Naive thymus-derived CD4-positive, alpha-beta T cell (primary cell): ENCODE measurements at regions of chr7 and their contacts with region 1.

Region 1: GRCh38 chr7:1919539-1920265 is 249.6 kb downstream of the ELFN1 start:
- DNase-seq: peak in 1 of 9 donors; percentile 46
- ATAC-seq: peak; percentile 21
- H3K4me3 ChIP-seq: peak overlapping the region; percentile 47
- H3K4me3 Mint-ChIP-seq: peak overlapping the region; percentile 79 to 97 (median 87)
- H3K27ac ChIP-seq: peak overlapping the region; percentile 47
- H3K27ac Mint-ChIP-seq: peak overlapping the region; percentile 51 to 97 (median 84)
- H3K4me1 ChIP-seq: peaks cover 21 to 69% of the 10 kb centered on the region in 2 donors
- H3K4me1 Mint-ChIP-seq: peaks cover 48 to 83% (median 59%) of the 10 kb centered on the region in 7 donors
- H3K27me3 ChIP-seq: no peaks in the 10 kb centered on the region
- H3K27me3 Mint-ChIP-seq: peaks cover 0 to 15% (median 0%) of the 10 kb centered on the region in 5 donors

Region 2: GRCh38 chr7:1569833-1570633 is 349.7 kb before region 1 on chr7 and contains the start of gene PSMG3:
- CTCF ChIA-PET with region 1: no interaction called
- POLR2A ChIA-PET with region 1: no interaction called
- intact Hi-C with region 1: loop called in 1 of 2 experiments (anchors 10 kb)
- DNase-seq: peak; percentile 72 to 91 (median 84)
- ATAC-seq: peak; percentile 94
- H3K4me3 ChIP-seq: peak within 1 kb of the TSS; percentile 90
- H3K4me3 Mint-ChIP-seq: peak within 1 kb of the TSS; percentile 77 to 91 (median 86)
- H3K27ac ChIP-seq: peak within 1 kb of the TSS; percentile 95
- H3K27ac Mint-ChIP-seq: peak within 1 kb of the TSS; percentile 81 to 93 (median 88)
- H3K4me1 ChIP-seq: peaks cover 3 to 16% of the 10 kb centered on the region in 2 donors
- H3K4me1 Mint-ChIP-seq: peaks cover 14 to 36% (median 26%) of the 10 kb centered on the region in 7 donors
- H3K27me3 ChIP-seq: no peaks in the 10 kb centered on the region
- H3K27me3 Mint-ChIP-seq: no peaks in the 10 kb centered on the region
- total RNA-seq, gene PSMG3: 12.1 to 31.8 (median 23.2) TPM

Region 3: DNA sequence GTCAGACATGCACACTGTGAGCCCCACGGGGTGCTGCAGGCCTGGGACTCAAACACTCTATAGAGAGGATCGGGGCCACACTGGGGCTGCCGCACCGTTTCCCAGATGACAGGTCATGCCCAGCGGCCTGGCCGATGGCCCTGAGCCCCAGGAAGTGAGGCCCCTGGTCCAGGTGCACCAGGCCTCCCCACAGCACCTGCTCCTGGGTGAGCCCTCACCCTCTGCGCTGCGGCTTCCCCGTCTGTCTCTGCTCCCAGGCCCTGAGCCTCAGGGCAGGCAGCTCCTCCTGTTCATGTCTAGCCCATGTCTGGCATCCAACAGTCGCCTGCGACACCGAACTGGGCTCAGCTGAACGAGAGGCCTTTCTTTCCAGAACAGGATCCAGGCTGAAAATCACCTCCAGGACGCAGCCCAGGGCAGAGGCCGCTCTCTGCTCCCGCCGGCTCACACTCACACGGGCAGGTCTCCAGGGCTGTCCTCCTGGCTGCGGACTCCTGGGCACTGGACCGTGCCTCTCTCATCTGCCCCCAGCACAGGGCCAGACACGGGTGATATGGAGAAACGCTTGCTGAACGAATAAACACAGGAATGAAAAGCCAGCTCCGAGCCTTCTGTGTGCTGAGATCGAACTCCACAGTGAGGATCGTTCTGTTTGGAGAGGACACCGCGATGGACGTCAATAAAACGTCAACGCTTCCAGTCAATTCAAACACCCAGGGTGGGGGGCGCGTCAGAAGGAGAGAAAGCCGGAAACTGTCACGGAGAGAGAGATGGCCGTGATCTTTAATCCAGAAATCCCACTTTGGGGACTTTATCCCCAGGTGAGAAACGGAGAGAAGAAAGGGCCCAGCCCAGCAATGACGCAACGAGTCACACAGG is 47.3 kb before region 1 on chr7:
- CTCF ChIA-PET with region 1: no interaction called
- POLR2A ChIA-PET with region 1: no interaction called
- intact Hi-C with region 1: no loop called
- DNase-seq: no peak
- ATAC-seq: no peak
- H3K4me3 ChIP-seq: no peak overlapping the region
- H3K4me3 Mint-ChIP-seq: no peak overlapping the region
- H3K27ac ChIP-seq: no peak overlapping the region
- H3K27ac Mint-ChIP-seq: peak overlapping the region in 1 of 9 donors; percentile 15
- H3K4me1 ChIP-seq: peaks cover 0 to 7% of the 10 kb centered on the region in 2 donors
- H3K4me1 Mint-ChIP-seq: peaks cover under 1 to 32% (median 14%) of the 10 kb centered on the region in 7 donors
- H3K27me3 ChIP-seq: no peaks in the 10 kb centered on the region
- H3K27me3 Mint-ChIP-seq: no peaks in the 10 kb centered on the region

Region 4: GRCh38 chr7:1931951-1932270 is 12.2 kb after region 1 on chr7:
- CTCF ChIA-PET with region 1: no interaction called
- POLR2A ChIA-PET with region 1: no interaction called
- intact Hi-C with region 1: no loop called
- DNase-seq: no peak
- ATAC-seq: no peak
- H3K4me3 ChIP-seq: no peak overlapping the region
- H3K4me3 Mint-ChIP-seq: peak overlapping the region in 1 of 10 donors; percentile 10
- H3K27ac ChIP-seq: no peak overlapping the region
- H3K27ac Mint-ChIP-seq: peak overlapping the region; percentile 13 to 91 (median 67)
- H3K4me1 ChIP-seq: peaks cover 11 to 31% of the 10 kb centered on the region in 2 donors
- H3K4me1 Mint-ChIP-seq: peaks cover 25 to 60% (median 48%) of the 10 kb centered on the region in 7 donors
- H3K27me3 ChIP-seq: no peaks in the 10 kb centered on the region
- H3K27me3 Mint-ChIP-seq: peaks cover 0 to 4% (median 0%) of the 10 kb centered on the region in 5 donors

Region 5: DNA sequence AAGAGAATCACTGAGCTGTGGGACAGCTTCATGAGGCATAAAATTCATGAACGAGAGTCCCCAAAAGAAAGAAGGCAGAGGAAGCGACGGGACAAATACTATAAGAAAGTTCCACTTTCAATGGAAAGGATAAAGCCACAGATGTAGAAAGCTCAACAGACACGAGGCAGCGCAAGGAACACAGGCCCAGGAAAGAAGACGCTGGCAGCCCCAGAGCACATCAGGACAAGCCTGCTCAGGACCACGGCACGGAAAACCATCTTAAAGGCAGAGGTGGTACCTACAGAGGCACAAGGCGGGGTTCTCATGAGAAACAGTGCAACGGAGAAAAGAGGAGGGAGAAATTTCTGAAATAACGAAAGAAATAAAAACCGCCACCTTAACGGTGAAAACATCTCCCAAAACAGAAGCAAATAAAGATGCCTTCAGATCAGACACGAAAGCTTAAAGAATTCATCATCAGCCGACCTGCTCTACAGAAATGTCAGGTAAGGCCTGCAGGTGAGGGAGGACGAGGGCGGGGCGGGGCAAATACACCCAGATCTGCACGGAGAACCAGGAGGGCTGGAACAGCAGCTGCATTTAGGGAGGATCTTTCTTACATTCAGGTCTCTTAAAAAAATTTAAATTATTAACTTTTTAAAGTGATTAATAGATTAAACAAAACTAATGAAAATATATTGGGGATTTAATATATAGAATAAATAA is 39.8 kb after region 1 on chr7:
- CTCF ChIA-PET with region 1: no interaction called
- POLR2A ChIA-PET with region 1: no interaction called
- intact Hi-C with region 1: no loop called
- DNase-seq: no peak
- ATAC-seq: no peak
- H3K4me3 ChIP-seq: no peak overlapping the region
- H3K4me3 Mint-ChIP-seq: no peak overlapping the region
- H3K27ac ChIP-seq: no peak overlapping the region
- H3K27ac Mint-ChIP-seq: peak overlapping the region in 3 of 9 donors; percentile 35 to 83 (median 72)
- H3K4me1 ChIP-seq: peaks cover 0 to 5% of the 10 kb centered on the region in 2 donors
- H3K4me1 Mint-ChIP-seq: peaks cover 2 to 17% (median 3%) of the 10 kb centered on the region in 7 donors
- H3K27me3 ChIP-seq: no peaks in the 10 kb centered on the region
- H3K27me3 Mint-ChIP-seq: peaks cover 0 to 8% (median 0%) of the 10 kb centered on the region in 5 donors

Region 6: GRCh38 chr7:1969459-1970284 is 50.0 kb after region 1 on chr7:
- CTCF ChIA-PET with region 1: no interaction called
- POLR2A ChIA-PET with region 1: no interaction called
- intact Hi-C with region 1: loop called (anchors 5 kb)
- DNase-seq: peak in 1 of 9 donors; percentile 18
- ATAC-seq: no peak
- H3K4me3 ChIP-seq: no peak overlapping the region
- H3K4me3 Mint-ChIP-seq: peak overlapping the region; percentile 17 to 73 (median 54)
- H3K27ac ChIP-seq: no peak overlapping the region
- H3K27ac Mint-ChIP-seq: peak overlapping the region; percentile 44 to 93 (median 79)
- H3K4me1 ChIP-seq: peaks cover 0 to 12% of the 10 kb centered on the region in 2 donors
- H3K4me1 Mint-ChIP-seq: peaks cover 20 to 55% (median 42%) of the 10 kb centered on the region in 7 donors
- H3K27me3 ChIP-seq: no peaks in the 10 kb centered on the region
- H3K27me3 Mint-ChIP-seq: no peaks in the 10 kb centered on the region

Region 7: GRCh38 chr7:2037808-2038522 is 118.3 kb after region 1 on chr7:
- CTCF ChIA-PET with region 1: no interaction called
- POLR2A ChIA-PET with region 1: interaction called, 3 read pairs
- intact Hi-C with region 1: loop called (anchors 2 to 5 kb)
- DNase-seq: peak in 7 of 9 donors; percentile 44 to 66 (median 53)
- ATAC-seq: peak; percentile 65
- H3K4me3 ChIP-seq: peak overlapping the region; percentile 83
- H3K4me3 Mint-ChIP-seq: peak overlapping the region; percentile 83 to 95 (median 92)
- H3K27ac ChIP-seq: peak overlapping the region; percentile 70
- H3K27ac Mint-ChIP-seq: peak overlapping the region; percentile 73 to 95 (median 92)
- H3K4me1 ChIP-seq: peaks cover 18 to 23% of the 10 kb centered on the region in 2 donors
- H3K4me1 Mint-ChIP-seq: peaks cover 37 to 66% (median 59%) of the 10 kb centered on the region in 7 donors
- H3K27me3 ChIP-seq: no peaks in the 10 kb centered on the region
- H3K27me3 Mint-ChIP-seq: no peaks in the 10 kb centered on the region

Region 8: GRCh38 chr7:2354186-2354938 is 434.7 kb after region 1 on chr7 and contains the start of gene EIF3B:
- CTCF ChIA-PET with region 1: no interaction called
- POLR2A ChIA-PET with region 1: no interaction called
- intact Hi-C with region 1: loop called (anchors 5 to 10 kb)
- DNase-seq: peak; percentile 87 to 97 (median 94)
- ATAC-seq: peak; percentile 90
- H3K4me3 ChIP-seq: peak within 1 kb of the TSS; percentile 89
- H3K4me3 Mint-ChIP-seq: peak within 1 kb of the TSS; percentile 90 to 100 (median 94)
- H3K27ac ChIP-seq: peak within 1 kb of the TSS; percentile 97
- H3K27ac Mint-ChIP-seq: peak within 1 kb of the TSS; percentile 98 to 100 (median 100)
- H3K4me1 ChIP-seq: peaks cover 25 to 38% of the 10 kb centered on the region in 2 donors
- H3K4me1 Mint-ChIP-seq: peaks cover 16 to 48% (median 31%) of the 10 kb centered on the region in 7 donors
- H3K27me3 ChIP-seq: no peaks in the 10 kb centered on the region
- H3K27me3 Mint-ChIP-seq: peaks cover 0 to 3% (median 0%) of the 10 kb centered on the region in 5 donors
- total RNA-seq, gene EIF3B: 127 to 189 (median 158) TPM